Activated CD4-positive, alpha-beta T cell treated with anti-CD3 and anti-CD28 coated beads for 36 hours (primary cell): ENCODE measurements at regions of chr2 and their contacts with region 1.

Region 1: GRCh38 chr2:98634401-98635092 is 26.2 kb downstream of the UNC50 start:
- DNase-seq: peak; percentile 79
- ATAC-seq: peak; percentile 67
- H3K4me3 Mint-ChIP-seq: peak overlapping the region; percentile 44
- H3K27ac Mint-ChIP-seq: peak overlapping the region; percentile 85
- H3K4me1 Mint-ChIP-seq: peaks cover 38% of the 10 kb centered on the region
- H3K27me3 Mint-ChIP-seq: no peaks in the 10 kb centered on the region

Region 2: DNA sequence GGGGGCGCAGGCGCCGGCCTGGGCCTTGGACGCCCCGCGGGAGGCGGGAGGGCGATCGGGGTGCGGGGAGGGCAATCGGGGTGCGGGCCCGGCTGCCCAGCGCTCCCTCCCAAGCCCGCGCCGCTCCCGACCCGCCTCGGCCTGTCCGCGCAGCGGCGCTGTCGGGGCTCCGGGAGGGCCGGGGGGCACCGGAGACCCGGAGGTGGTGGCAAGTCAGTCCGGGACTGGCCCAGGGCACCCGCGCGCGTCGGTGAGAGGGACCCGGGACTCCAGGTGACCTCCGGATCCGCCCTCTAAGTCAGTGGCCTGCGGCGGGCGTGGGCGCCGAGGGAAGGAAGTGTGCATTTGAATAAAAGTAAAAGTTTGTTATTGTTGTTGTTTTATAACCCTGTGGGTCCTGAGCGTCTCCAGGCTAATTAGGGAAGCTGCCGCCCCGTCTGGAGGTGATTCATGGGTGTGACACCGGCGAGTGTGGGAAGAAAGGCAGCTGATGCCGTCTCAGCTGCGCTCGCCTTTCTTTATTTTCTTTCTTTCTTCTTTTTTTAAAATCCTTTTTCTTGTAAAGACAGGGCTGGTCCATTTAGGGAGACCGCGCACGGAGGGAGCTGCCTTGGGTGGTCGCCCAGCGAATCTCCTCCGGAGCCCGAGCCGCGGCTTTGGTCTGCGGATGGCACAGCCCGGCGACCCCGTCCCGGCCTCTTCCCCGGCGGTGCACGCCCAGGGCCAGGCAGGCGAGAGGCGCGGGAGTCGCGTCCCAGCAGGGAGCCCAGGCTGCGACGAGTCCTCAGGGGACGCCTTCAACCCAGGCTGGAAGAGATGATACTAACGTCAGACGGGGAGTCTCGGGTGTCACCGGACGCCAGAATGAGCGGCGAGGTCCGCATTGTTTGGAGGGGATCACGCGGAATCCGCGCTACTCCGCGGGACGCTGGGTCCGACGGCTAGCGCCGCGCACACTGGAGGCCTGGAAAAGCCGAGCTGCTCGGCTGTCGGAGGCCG is 302.1 kb after region 1 on chr2:
- CTCF ChIA-PET with region 1: no interaction called
- POLR2A ChIA-PET with region 1: no interaction called
- intact Hi-C with region 1: loop called in 1 of 2 experiments (anchors 10 kb)
- DNase-seq: peak; percentile 60
- ATAC-seq: peak; percentile 62
- H3K4me3 Mint-ChIP-seq: peak overlapping the region; percentile 55
- H3K27ac Mint-ChIP-seq: no peak overlapping the region
- H3K4me1 Mint-ChIP-seq: peaks cover 10% of the 10 kb centered on the region
- H3K27me3 Mint-ChIP-seq: peaks cover 39% of the 10 kb centered on the region